MCF 10A (cell line): ENCODE measurements at regions of chr16 and their contacts with region 1.

Region 1: DNA sequence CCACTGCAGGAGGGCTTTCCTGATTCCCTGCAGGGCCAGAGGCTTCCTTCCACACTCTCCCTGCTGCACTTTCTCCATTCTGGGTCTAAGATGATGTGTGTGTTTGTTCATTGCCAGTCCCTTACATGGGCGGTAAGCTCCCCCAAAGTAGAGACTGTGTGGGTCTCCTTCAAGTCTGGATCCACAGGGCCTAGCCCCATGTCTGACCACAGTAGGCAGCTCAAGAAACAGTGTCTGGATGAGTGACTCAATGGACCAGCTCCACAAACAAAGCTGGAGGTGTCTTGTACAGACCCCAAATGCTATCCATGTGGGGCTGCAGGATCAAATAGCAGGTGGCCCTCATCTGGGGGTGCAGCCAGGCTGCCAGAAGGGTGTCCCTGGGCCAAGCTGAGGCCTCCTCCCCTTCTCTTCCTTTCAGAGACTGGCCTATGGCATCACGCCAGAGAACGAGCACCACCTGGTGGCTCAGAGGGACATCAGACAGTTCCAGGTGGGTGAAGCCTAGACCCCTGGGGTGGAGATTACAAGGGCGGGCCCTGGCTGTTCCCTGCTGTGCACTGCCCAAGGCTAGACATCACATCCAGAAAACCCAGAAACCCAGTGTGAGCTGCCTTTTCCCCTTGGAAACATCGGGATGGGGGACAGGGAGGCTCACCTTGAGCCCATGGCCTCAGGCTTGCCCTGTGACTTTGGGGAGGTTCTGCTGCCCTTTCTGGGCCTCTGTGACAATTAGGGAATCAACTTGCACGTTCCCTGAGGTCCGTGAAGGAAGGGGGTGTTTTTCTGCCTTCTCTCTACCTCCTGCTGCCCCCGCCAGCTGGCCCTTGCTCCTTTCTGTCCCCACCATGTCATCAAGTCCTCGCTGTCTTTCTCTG is 45.9 kb downstream of the SLC6A2 start:
- DNase-seq: peak; percentile 70
- H3K4me3 Mint-ChIP-seq: no peak overlapping the region
- H3K27ac Mint-ChIP-seq: no peak overlapping the region
- H3K4me1 Mint-ChIP-seq: no peaks in the 10 kb centered on the region
- H3K27me3 Mint-ChIP-seq: peaks cover 14% of the 10 kb centered on the region
- CTCF ChIP-seq: peak; percentile 65

Region 2: DNA sequence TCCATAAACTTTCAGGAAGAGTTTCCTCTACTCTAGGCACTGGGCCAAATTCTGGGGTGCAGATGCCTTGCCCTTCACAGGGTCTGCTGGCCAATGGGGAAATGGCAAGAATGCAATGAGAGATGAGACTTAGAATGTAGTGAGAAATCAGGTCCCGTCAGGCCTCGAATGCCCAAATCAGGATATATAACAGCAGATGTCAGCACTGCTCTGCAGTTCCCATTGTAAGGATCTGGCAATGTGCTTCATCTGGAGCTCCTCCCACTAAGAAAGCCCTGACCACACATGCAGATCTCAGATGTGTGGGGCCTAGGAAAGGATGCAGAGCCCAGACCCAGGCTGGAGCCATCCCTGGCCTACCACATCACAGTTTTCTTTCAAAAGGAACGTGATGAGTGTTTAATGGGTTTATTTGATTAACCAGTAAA is 206.7 kb before region 1 on chr16:
- CTCF ChIA-PET with region 1: interaction called, 80 read pairs
- POLR2A ChIA-PET with region 1: no interaction called
- intact Hi-C with region 1: loop called (anchors 1 kb)
- DNase-seq: peak; percentile 71
- H3K4me3 Mint-ChIP-seq: no peak overlapping the region
- H3K27ac Mint-ChIP-seq: no peak overlapping the region
- H3K4me1 Mint-ChIP-seq: peaks cover 27% of the 10 kb centered on the region
- H3K27me3 Mint-ChIP-seq: no peaks in the 10 kb centered on the region
- CTCF ChIP-seq: peak; percentile 40

Region 3: DNA sequence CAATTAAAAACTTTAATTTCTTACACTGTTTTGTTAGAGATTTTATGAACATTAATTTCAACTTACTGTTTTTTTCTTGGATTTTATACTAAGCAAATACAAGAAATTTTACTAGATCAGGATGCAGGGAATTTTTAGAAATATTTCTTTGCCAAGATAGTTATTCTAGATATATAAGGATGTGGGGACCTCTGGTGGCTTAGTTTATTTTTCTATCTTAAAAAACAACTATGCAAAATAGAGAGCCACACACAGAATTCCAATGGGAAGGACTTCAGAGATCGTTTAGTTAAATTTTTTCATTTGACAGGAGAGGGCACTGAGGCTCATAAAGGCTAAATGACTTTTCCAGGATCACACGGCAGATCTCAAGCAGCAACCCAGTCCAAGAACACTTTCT is 158.2 kb before region 1 on chr16:
- CTCF ChIA-PET with region 1: interaction called, 69 read pairs
- POLR2A ChIA-PET with region 1: interaction called, 5 read pairs
- intact Hi-C with region 1: loop called (anchors 1 kb)
- DNase-seq: peak; percentile 49
- H3K4me3 Mint-ChIP-seq: no peak overlapping the region
- H3K27ac Mint-ChIP-seq: no peak overlapping the region
- H3K4me1 Mint-ChIP-seq: no peaks in the 10 kb centered on the region
- H3K27me3 Mint-ChIP-seq: no peaks in the 10 kb centered on the region
- CTCF ChIP-seq: peak; percentile 23

Region 4: DNA sequence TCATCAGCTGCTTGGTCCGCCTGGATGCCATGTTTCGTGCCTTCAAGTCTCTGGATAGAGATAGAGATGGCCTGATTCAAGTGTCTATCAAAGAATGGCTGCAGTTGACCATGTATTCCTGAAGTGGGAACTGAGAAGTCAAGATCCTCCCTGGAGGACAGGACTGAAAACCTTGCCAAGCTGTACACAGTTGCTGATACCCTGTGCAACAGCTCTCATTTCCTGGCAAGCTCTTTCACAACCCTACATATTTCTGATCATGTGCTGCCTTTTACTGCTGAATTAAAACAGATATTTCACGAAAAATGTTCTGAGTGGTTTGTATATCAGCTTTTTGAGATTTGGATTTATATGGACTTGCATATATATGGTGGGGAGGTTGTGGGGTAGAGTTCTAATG is 134.3 kb before region 1 on chr16:
- CTCF ChIA-PET with region 1: interaction called, 12 read pairs
- POLR2A ChIA-PET with region 1: no interaction called
- intact Hi-C with region 1: no loop called
- DNase-seq: peak; percentile 73
- H3K4me3 Mint-ChIP-seq: peak overlapping the region; percentile 59
- H3K27ac Mint-ChIP-seq: peak overlapping the region; percentile 97
- H3K4me1 Mint-ChIP-seq: peaks cover 50% of the 10 kb centered on the region
- H3K27me3 Mint-ChIP-seq: no peaks in the 10 kb centered on the region
- CTCF ChIP-seq: no peak

Region 5: GRCh38 chr16:55597928-55598327 is 103.8 kb before region 1 on chr16:
- CTCF ChIA-PET with region 1: no interaction called
- POLR2A ChIA-PET with region 1: no interaction called
- intact Hi-C with region 1: no loop called
- DNase-seq: no peak
- H3K4me3 Mint-ChIP-seq: no peak overlapping the region
- H3K27ac Mint-ChIP-seq: no peak overlapping the region
- H3K4me1 Mint-ChIP-seq: no peaks in the 10 kb centered on the region
- H3K27me3 Mint-ChIP-seq: no peaks in the 10 kb centered on the region
- CTCF ChIP-seq: no peak

Region 6: DNA sequence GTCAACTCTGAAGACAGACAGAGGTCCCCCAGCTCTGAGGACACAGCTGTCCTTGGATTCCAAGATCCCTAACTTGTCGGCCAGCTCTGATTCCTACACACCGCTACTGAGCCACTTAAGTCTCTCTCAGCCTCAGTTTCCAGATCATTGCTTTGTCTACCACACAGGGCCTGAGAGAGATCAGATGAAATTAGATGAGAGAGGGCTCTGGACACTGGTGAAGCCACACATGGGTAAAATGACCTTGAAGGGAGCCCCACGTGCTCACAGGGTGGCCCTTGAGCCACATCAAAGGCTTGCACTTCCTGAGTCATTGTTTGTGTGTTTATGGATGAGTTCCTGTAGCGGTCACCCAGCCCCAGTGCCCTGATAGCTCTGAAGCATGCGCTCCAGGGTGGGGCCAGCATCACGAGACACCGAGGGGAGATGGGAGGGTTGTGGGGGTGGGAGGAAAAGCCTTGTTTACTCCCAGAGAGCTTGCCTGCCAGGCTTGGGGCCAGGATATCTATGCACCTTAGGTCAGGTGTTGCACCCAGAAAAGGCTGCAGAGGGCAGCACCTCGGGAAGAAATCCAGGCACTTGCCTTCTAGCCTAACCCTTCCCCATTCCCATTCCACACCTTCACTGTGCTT is 78.6 kb before region 1 on chr16:
- CTCF ChIA-PET with region 1: no interaction called
- POLR2A ChIA-PET with region 1: no interaction called
- intact Hi-C with region 1: loop called (anchors 2 kb)
- DNase-seq: peak; percentile 45
- H3K4me3 Mint-ChIP-seq: no peak overlapping the region
- H3K27ac Mint-ChIP-seq: no peak overlapping the region
- H3K4me1 Mint-ChIP-seq: peaks cover 6% of the 10 kb centered on the region
- H3K27me3 Mint-ChIP-seq: no peaks in the 10 kb centered on the region
- CTCF ChIP-seq: no peak

Region 7: GRCh38 chr16:55678161-55678821 is 23.4 kb before region 1 on chr16:
- CTCF ChIA-PET with region 1: interaction called, 10 read pairs
- POLR2A ChIA-PET with region 1: interaction called, 3 read pairs
- intact Hi-C with region 1: no loop called
- DNase-seq: no peak
- H3K4me3 Mint-ChIP-seq: no peak overlapping the region
- H3K27ac Mint-ChIP-seq: no peak overlapping the region
- H3K4me1 Mint-ChIP-seq: no peaks in the 10 kb centered on the region
- H3K27me3 Mint-ChIP-seq: no peaks in the 10 kb centered on the region
- CTCF ChIP-seq: no peak

Region 8: GRCh38 chr16:55711959-55712876 is 10.5 kb after region 1 on chr16:
- CTCF ChIA-PET with region 1: interaction called, 27 read pairs
- POLR2A ChIA-PET with region 1: interaction called, 3 read pairs
- intact Hi-C with region 1: no loop called
- DNase-seq: peak; percentile 74
- H3K4me3 Mint-ChIP-seq: no peak overlapping the region
- H3K27ac Mint-ChIP-seq: no peak overlapping the region
- H3K4me1 Mint-ChIP-seq: no peaks in the 10 kb centered on the region
- H3K27me3 Mint-ChIP-seq: no peaks in the 10 kb centered on the region
- CTCF ChIP-seq: peak; percentile 63

Region 9: GRCh38 chr16:55760310-55761001 is 58.8 kb after region 1 on chr16:
- CTCF ChIA-PET with region 1: no interaction called
- POLR2A ChIA-PET with region 1: no interaction called
- intact Hi-C with region 1: no loop called
- DNase-seq: no peak
- H3K4me3 Mint-ChIP-seq: no peak overlapping the region
- H3K27ac Mint-ChIP-seq: no peak overlapping the region
- H3K4me1 Mint-ChIP-seq: peaks cover 7% of the 10 kb centered on the region
- H3K27me3 Mint-ChIP-seq: no peaks in the 10 kb centered on the region
- CTCF ChIP-seq: no peak

Region 10: DNA sequence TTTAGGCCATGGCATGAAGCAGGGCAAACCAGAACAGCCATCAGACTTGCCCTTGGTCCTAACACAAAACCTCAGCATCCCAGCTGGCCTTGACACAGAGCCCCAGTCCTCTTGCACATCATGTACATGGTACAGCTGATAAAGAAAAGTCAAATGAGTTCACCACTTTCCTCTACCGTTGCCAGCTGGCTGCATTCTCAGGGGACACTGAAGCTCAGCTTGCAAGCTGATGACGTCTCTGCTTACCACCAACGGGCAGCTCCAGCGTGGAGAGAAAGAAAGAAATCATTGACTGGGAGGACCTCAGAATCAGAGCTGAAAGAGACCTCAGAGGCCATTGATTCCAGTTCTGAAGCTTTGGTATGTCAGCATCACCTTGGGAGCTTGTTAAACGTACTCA is 254.2 kb after region 1 on chr16:
- CTCF ChIA-PET with region 1: no interaction called
- POLR2A ChIA-PET with region 1: no interaction called
- intact Hi-C with region 1: no loop called
- DNase-seq: no peak
- H3K4me3 Mint-ChIP-seq: no peak overlapping the region
- H3K27ac Mint-ChIP-seq: no peak overlapping the region
- H3K4me1 Mint-ChIP-seq: no peaks in the 10 kb centered on the region
- H3K27me3 Mint-ChIP-seq: peaks cover 64% of the 10 kb centered on the region
- CTCF ChIP-seq: no peak